ENCODE measurements at regions of chr10 and their contacts with region 1.

Region 1: DNA sequence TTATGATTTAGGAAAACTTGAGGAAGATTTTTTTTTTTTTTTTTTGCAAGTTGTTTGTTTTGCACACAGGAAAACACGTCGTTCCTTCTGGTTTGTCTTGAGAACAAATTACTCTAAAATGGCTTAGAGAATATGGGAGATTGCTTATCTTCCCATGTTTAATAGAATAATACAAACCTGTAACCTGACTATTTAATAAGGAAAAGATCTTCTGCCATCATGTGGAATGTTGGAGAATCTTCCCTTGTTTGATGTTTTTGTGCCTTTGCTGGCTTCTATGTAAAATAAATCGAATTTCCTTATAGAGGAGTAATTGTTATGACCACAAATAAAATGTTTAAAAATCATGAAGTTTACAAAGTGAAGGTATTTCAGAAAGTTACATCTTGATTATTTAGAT is 818.8 kb downstream of the GATA3 start:
- DNase-seq: peak; percentile 29
- H3K4me3 Mint-ChIP-seq: no peak overlapping the region
- H3K27ac Mint-ChIP-seq: no peak overlapping the region
- H3K4me1 Mint-ChIP-seq: peaks cover 19% of the 10 kb centered on the region
- H3K27me3 Mint-ChIP-seq: no peaks in the 10 kb centered on the region
- CTCF ChIP-seq: peak; percentile 36

Region 2: DNA sequence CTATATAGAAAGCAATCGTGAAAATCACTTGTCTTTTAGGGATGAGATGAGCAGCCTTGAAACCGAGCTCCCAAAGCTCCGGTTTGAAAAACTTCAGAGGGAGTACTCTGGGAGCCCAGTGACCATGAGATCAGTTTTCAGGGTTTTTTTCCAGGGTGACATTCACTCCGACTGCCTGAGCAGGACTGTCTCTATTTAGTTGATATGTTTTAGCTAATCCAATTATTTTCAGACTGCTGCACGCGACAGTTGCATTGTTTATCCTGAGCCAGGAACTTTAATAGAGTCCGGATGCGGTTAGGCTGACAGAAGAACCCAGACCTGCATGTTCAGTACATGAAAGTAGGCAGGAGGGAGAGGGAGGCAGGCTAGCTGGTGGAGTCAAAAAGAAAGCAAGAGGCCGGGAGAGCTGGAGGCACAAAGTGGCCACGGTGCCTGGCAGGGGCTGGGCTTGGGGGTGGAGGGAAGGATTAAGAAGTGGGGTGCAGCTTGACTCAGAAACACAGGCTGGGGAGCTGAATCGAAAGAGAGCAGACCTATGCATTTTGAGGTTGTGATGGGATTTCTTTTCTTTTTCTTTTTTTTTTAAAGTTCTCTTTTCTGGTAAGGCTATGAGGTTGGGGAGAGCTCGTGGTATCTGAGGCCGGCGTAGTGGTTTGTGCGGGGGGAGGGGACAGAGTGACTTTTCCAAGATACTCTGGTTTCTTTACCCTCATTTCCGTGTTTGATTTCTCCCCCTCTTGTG is 813.2 kb before region 1 on chr10:
- CTCF ChIA-PET with region 1: interaction called, 4 read pairs
- POLR2A ChIA-PET with region 1: interaction called, 10 read pairs
- intact Hi-C with region 1: no loop called
- DNase-seq: peak; percentile 25
- H3K4me3 Mint-ChIP-seq: peak overlapping the region; percentile 93
- H3K27ac Mint-ChIP-seq: peak overlapping the region; percentile 93
- H3K4me1 Mint-ChIP-seq: peaks cover 32% of the 10 kb centered on the region
- H3K27me3 Mint-ChIP-seq: no peaks in the 10 kb centered on the region
- CTCF ChIP-seq: no peak

Region 3: GRCh38 chr10:9209105-9209798 is 335.9 kb after region 1 on chr10:
- CTCF ChIA-PET with region 1: interaction called, 4 read pairs
- POLR2A ChIA-PET with region 1: interaction called, 3 read pairs
- intact Hi-C with region 1: loop called (anchors 1 kb)
- DNase-seq: peak; percentile 71
- H3K4me3 Mint-ChIP-seq: no peak overlapping the region
- H3K27ac Mint-ChIP-seq: peak overlapping the region; percentile 42
- H3K4me1 Mint-ChIP-seq: peaks cover 8% of the 10 kb centered on the region
- H3K27me3 Mint-ChIP-seq: no peaks in the 10 kb centered on the region
- CTCF ChIP-seq: peak; percentile 88

Region 4: DNA sequence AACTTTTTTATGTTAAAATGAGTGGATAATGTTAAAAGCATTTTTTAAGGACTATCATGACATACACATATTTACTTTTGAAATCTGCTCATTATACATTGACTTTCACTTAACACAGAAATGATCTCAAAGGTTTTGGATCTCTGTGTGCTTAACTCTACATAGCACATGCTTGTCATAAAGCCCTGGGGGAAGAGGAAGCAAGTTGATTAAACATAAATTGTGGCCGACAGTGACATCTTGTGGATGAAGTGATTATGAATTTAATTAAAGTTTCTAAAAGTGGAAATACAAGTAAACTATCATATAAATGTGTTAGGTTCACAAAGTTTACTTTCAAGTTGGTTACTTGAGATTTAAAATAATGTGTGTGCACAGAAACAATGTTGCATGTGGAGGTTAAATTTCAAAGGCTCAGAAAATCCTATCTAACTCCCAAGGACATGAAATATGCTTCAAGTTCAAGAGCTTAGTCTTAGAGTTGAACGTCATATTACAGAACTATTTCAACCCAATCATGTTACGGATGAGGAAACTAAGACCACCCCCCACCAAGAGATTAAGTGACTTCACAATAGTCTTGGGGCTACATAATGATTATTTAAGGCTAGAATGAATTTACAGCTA is 428.9 kb after region 1 on chr10:
- CTCF ChIA-PET with region 1: interaction called, 4 read pairs
- POLR2A ChIA-PET with region 1: no interaction called
- intact Hi-C with region 1: loop called (anchors 2 kb)
- DNase-seq: peak; percentile 74
- H3K4me3 Mint-ChIP-seq: no peak overlapping the region
- H3K27ac Mint-ChIP-seq: no peak overlapping the region
- H3K4me1 Mint-ChIP-seq: no peaks in the 10 kb centered on the region
- H3K27me3 Mint-ChIP-seq: no peaks in the 10 kb centered on the region
- CTCF ChIP-seq: peak; percentile 38

Measured in MCF 10A (cell line).